ENCODE measurements at regions of chr5 and their contacts with region 1.

Region 1: DNA sequence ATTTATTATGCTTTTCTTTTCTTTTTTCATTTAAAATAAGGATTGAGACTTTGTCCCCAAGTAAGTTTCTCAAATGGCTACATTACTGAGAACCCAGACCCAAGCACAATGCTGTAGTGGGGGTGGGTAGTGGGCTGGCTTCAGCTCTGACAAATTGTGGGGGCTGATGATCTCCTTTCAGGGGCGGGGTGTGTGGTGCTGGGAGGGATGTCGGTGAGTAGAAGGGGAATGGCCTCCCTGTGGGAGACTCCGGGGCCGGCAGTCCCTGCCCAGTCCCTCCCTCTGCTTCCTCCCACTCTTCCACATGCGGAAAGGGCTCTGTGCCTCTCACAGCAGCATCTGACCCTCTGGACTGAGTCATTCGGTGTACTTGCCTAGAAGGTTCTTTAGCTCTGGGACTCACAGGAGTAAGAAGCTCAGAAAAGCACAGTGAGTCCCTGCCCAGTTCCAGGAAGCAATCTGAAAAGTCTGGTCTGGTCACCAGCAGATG is 14.3 kb downstream of the CD180 start:
- DNase-seq: no peak
- ATAC-seq: no peak
- H3K4me3 ChIP-seq: no peak overlapping the region
- H3K4me3 Mint-ChIP-seq: no peak overlapping the region
- H3K27ac ChIP-seq: no peak overlapping the region
- H3K27ac Mint-ChIP-seq: no peak overlapping the region
- H3K4me1 ChIP-seq: peaks cover 33% of the 10 kb centered on the region
- H3K4me1 Mint-ChIP-seq: peaks cover 47% of the 10 kb centered on the region
- H3K27me3 ChIP-seq: no peaks in the 10 kb centered on the region
- H3K27me3 Mint-ChIP-seq: no peaks in the 10 kb centered on the region
- CTCF ChIP-seq: no peak

Region 2: GRCh38 chr5:67196537-67197059 is 14.3 kb after region 1 on chr5 and contains the start of gene CD180:
- CTCF ChIA-PET with region 1: no interaction called
- POLR2A ChIA-PET with region 1: interaction called, 3 read pairs
- intact Hi-C with region 1: loop called in 1 of 2 experiments (anchors 2 kb)
- DNase-seq: no peak
- ATAC-seq: no peak
- H3K4me3 ChIP-seq: no peak within 1 kb of the TSS
- H3K4me3 Mint-ChIP-seq: peak within 1 kb of the TSS; percentile 49
- H3K27ac ChIP-seq: no peak within 1 kb of the TSS
- H3K27ac Mint-ChIP-seq: no peak within 1 kb of the TSS
- H3K4me1 ChIP-seq: peaks cover 18% of the 10 kb centered on the region
- H3K4me1 Mint-ChIP-seq: peaks cover 40% of the 10 kb centered on the region
- H3K27me3 ChIP-seq: no peaks in the 10 kb centered on the region
- H3K27me3 Mint-ChIP-seq: no peaks in the 10 kb centered on the region
- CTCF ChIP-seq: no peak
- total RNA-seq, gene CD180: 0.58 TPM in 1 of 2 experiments, not detected in the other

Region 3: GRCh38 chr5:67209142-67209771 is 26.9 kb after region 1 on chr5:
- CTCF ChIA-PET with region 1: interaction called, 5 read pairs
- POLR2A ChIA-PET with region 1: interaction called, 11 read pairs
- intact Hi-C with region 1: no loop called
- DNase-seq: peak; percentile 12 to 84 (median 61)
- ATAC-seq: peak; percentile 51
- H3K4me3 ChIP-seq: no peak overlapping the region
- H3K4me3 Mint-ChIP-seq: peak overlapping the region; percentile 13
- H3K27ac ChIP-seq: no peak overlapping the region
- H3K27ac Mint-ChIP-seq: peak overlapping the region; percentile 86
- H3K4me1 ChIP-seq: peaks cover 49% of the 10 kb centered on the region
- H3K4me1 Mint-ChIP-seq: peaks cover 58% of the 10 kb centered on the region
- H3K27me3 ChIP-seq: no peaks in the 10 kb centered on the region
- H3K27me3 Mint-ChIP-seq: no peaks in the 10 kb centered on the region
- CTCF ChIP-seq: peak; percentile 81